Spleen (tissue), 13 donors: ENCODE measurements at regions of chr4 and their contacts with region 1.

Region 1: GRCh38 chr4:77156533-77156911 is 485 bp upstream of the CCNG2 start:
- DNase-seq: peak; percentile 97
- H3K4me3 ChIP-seq: peak overlapping the region; percentile 81 to 99 (median 96)
- H3K27ac ChIP-seq: peak overlapping the region; percentile 81 to 99 (median 98)
- H3K4me1 ChIP-seq: peaks cover 18 to 86% (median 65%) of the 10 kb centered on the region in 6 donors
- H3K27me3 ChIP-seq: no peaks in the 10 kb centered on the region
- CTCF ChIP-seq: no peak
- POLR2A ChIP-seq: peak in 1 of 3 donors; percentile 49

Region 2: GRCh38 chr4:77074981-77075855 is 81.3 kb before region 1 on chr4:
- intact Hi-C with region 1: loop called (anchors 5 kb)
- DNase-seq: peak; percentile 97
- H3K4me3 ChIP-seq: peak overlapping the region; percentile 61 to 89 (median 68)
- H3K27ac ChIP-seq: peak overlapping the region; percentile 99 to 100 (median 100)
- H3K4me1 ChIP-seq: peaks cover 25 to 84% (median 63%) of the 10 kb centered on the region in 6 donors
- H3K27me3 ChIP-seq: no peaks in the 10 kb centered on the region
- CTCF ChIP-seq: no peak
- POLR2A ChIP-seq: peak; percentile 66 to 77 (median 70)

Region 3: DNA sequence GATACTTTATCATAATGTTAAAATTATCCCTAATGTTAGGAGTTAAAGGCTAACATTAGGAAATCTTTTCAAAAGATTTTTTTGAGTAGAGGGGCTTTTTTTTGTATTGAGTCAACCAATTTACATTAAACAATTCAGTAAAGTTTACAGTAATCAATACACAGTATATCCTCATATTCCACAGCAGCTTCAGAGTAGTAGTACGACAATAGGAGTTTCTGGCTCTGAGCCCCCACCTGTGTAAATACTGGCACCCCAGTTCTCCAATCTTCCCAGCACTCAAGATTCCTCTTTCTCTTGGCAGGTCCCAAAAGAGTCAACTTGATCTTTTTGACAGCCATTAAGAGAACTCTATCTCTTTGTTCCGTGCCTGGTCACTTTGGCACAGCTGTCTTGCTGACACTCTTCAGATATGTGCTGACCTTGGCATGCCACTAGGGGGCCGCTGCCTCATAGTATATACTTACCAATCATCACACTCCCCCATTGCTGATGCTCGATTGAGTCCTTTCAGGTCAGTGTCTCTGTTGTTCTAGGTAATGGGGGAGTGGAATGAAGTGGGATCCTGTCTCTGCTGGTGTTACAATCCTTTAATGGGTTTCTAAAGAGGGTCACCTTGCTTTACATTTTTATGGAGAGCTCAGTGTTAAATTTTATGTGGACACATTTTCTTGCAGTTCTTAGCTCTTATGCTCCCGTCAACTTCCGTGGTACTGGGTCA is 61.3 kb before region 1 on chr4:
- intact Hi-C with region 1: loop called (anchors 10 kb)
- DNase-seq: peak; percentile 93
- H3K4me3 ChIP-seq: no peak overlapping the region
- H3K27ac ChIP-seq: no peak overlapping the region
- H3K4me1 ChIP-seq: peaks cover under 1 to 31% (median 11%) of the 10 kb centered on the region in 6 donors
- H3K27me3 ChIP-seq: no peaks in the 10 kb centered on the region
- CTCF ChIP-seq: peak; percentile 60 to 90 (median 82)
- POLR2A ChIP-seq: no peak

Region 4: DNA sequence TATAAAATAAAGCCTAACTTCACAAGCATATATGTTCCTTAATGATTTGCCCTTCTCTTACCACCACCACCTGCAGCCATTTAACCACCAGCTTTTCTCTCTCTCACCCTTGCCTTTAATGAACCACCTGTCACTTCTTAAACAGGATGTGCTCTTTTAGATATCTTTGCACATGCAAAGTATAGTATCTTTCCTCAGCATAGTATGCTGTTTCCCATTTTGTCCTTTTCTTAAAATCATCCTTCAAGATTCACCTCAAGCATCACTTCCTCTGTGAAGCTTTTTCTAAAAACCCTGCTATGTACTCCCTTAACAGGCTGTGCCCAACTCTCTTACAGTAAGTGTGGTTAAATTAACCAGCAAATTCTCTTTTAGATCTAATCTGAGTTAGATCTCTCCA is 670.8 kb after region 1 on chr4:
- intact Hi-C with region 1: no loop called
- DNase-seq: no peak
- H3K4me3 ChIP-seq: no peak overlapping the region
- H3K27ac ChIP-seq: peak overlapping the region in 7 of 8 donors; percentile 21 to 78 (median 63)
- H3K4me1 ChIP-seq: peaks cover 5 to 47% (median 35%) of the 10 kb centered on the region in 6 donors
- H3K27me3 ChIP-seq: no peaks in the 10 kb centered on the region
- CTCF ChIP-seq: no peak
- POLR2A ChIP-seq: no peak